Aorta (tissue), 5 donors: ENCODE measurements at regions of chr20 and their contacts with region 1.

Region 1: DNA sequence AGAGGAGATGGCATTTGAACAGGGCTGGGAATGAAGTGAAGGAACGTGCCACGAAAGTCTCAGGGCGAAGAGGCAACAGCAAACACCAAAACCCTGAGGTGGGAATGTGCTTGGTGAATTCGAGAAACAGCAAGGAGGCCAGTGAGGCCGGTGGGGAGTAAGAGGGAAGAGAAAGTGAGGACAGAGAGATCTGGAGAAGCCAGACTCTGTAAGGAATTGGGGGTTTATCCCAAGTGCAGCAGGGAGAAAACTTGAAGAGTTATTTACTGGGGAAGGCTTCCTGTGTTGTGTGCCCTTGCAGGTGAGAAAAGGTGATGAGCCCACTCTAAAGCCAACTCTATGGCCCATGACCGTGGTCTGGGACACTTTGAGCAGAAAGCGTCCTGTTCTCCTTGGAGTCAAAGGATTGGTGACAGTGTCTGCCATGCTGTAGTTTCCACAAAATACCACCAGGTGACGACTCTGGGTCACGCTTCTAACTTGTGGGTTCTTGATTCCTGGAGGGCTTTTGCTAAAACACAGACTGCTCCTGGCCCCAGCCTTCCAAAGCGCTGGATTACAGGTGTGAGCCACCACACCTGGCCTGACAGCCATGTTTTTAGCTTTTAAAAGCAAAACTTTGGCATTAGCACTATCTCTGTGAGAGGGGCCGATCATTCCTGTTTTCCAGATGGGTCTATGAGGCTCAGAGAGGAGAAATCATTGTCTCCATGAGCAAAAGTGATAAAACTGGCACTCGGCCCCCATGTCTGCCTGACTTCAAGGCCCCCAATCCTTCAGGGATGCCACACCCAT is 18.0 kb upstream of the CSNK2A1 start:
- DNase-seq: peak in 1 of 2 donors; percentile 63
- ATAC-seq: peak; percentile 82
- H3K4me3 ChIP-seq: no peak overlapping the region
- H3K27ac ChIP-seq: no peak overlapping the region
- H3K4me1 ChIP-seq: no peaks in the 10 kb centered on the region
- H3K27me3 ChIP-seq: no peaks in the 10 kb centered on the region

Region 2: DNA sequence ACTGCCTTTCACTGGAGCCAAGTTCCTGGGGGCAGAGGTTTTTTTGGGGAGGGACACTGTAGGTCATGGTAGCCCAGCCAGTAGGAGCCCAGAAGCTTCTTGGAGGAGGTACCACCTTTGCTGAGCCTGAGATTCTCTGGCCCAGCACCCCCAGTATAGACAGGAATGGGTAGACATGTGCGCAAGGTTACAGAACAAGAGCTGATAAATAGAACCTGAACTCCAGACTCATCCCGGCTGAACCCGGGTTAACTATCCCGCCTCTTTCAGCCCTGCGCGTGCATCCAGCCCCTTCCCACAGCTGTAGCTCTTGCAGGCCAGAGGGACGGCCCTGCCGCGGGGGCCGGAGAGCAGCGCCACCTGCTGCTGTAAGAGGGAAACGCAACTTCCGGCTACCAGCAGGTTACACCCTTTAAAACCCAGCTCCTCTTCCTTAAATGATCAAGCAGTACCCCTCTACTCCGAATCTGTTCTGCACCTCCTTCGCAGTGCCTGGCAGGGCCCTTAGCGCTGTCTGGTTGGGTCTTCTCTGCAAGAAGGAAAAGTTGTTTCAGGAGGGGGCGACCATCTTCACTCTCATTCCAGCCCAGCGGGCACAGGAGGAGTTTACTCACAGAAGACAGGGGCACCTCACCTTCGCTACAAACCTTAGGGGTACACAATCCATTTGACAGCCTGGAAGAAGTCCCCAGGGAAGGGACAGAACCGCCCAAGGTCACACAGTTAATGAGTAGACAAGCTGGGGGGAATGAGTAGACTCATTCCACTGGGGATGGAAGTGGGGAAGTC is 83.9 kb after region 1 on chr20:
- intact Hi-C with region 1: loop called (anchors 10 kb)
- DNase-seq: peak; percentile 63 to 88
- ATAC-seq: peak; percentile 78
- H3K4me3 ChIP-seq: no peak overlapping the region
- H3K27ac ChIP-seq: no peak overlapping the region
- H3K4me1 ChIP-seq: no peaks in the 10 kb centered on the region
- H3K27me3 ChIP-seq: no peaks in the 10 kb centered on the region

Region 3: GRCh38 chr20:667391-667964 is 105.8 kb after region 1 on chr20:
- intact Hi-C with region 1: loop called in 1 of 2 experiments (anchors 5 kb)
- DNase-seq: peak; percentile 70 to 87
- ATAC-seq: no peak
- H3K4me3 ChIP-seq: no peak overlapping the region
- H3K27ac ChIP-seq: no peak overlapping the region
- H3K4me1 ChIP-seq: no peaks in the 10 kb centered on the region
- H3K27me3 ChIP-seq: no peaks in the 10 kb centered on the region

Region 4: DNA sequence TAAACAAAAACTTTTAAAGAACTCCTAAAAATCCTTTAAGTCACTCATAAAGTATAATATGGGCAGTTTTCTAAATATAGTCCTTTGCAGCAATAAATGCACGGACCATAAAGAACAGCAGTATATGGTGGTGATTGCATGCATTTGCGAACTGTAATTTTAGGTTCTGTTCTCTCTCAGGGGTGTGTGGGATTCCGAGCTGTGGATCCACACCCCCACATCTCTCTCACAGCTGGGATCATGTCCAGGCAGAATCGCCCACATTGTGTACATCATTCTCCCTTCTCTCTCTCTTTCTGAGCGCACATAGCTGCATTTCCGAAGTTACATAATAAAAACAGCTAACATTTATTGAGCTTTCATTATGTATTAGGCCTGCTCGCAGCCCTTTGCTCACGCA is 178.1 kb after region 1 on chr20:
- intact Hi-C with region 1: loop called (anchors 1 to 5 kb)
- DNase-seq: no peak
- ATAC-seq: no peak
- H3K4me3 ChIP-seq: no peak overlapping the region
- H3K27ac ChIP-seq: no peak overlapping the region
- H3K4me1 ChIP-seq: no peaks in the 10 kb centered on the region
- H3K27me3 ChIP-seq: peaks cover 0 to 2% of the 10 kb centered on the region in 2 donors